GM12878 (cell line): ENCODE measurements at regions of chr6 and their contacts with region 1.

Region 1: GRCh38 chr6:16277101-16277981 is 39.0 kb downstream of the GMPR start:
- DNase-seq: no peak
- ATAC-seq: peak; percentile 88
- H3K4me3 ChIP-seq: no peak overlapping the region
- H3K27ac ChIP-seq: no peak overlapping the region
- H3K4me1 ChIP-seq: no peaks in the 10 kb centered on the region
- H3K27me3 ChIP-seq: no peaks in the 10 kb centered on the region; a peak in 2 of 4 replicates
- CTCF ChIP-seq: peak; percentile 34 to 39 (median 37); a peak in 4 of 6 replicates
- EP300 ChIP-seq: no peak
- POLR2A ChIP-seq: no peak
- RAD21 ChIP-seq: peak; percentile 44

Region 2: DNA sequence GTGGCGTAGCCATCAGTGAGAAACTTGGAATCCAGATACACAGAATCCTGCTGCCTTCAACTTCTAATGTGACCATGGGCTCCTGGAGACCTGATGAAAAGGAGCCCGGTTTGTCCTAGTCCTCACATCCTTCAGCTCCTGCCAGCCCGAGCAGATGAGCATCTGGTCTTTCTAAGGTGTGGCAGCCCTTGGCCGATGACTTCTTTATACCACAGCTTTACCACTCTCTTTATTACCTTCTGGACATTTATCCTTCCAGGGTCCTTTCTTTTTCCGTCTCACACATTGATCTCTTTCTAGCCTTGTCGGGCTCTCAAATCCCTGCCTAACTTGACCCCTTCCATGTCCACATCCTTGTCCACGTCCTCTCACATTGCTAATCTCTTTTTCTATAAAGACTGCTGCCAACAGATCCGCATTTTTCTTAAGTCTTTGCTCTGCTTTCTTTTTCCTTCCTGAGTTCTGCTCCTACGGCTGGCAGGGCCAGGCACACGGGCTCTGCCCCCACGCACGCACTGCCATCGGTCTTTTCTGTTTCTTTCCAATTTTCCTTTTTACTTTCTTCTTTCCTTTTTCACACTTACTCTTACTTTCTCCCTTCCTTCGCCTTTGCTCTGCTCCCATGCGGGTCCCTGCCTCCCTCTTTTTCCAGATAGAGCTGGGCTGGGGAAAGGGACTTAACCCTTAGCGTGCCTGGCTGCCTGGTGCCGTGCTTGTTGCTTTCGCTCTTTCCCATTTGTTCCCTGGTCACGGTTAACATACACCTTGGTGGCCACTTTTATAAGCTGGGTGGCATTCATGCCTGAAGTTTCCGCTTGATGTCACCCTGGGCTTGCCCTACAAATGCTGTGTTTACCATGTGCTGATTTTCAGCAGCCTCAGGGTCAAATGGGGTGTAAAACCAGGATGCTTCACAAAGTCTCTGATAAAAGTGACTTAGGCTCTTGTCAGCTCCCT is 48.4 kb before region 1 on chr6:
- CTCF ChIA-PET with region 1: interaction called, 11 read pairs
- POLR2A ChIA-PET with region 1: no interaction called
- RAD21 ChIA-PET with region 1: interaction called, 3 read pairs
- SMC1A ChIA-PET with region 1: interaction called, 3 read pairs
- in situ Hi-C with region 1: no loop called
- intact Hi-C with region 1: no loop called
- DNase-seq: no peak
- ATAC-seq: peak; percentile 55
- H3K4me3 ChIP-seq: no peak overlapping the region
- H3K27ac ChIP-seq: no peak overlapping the region
- H3K4me1 ChIP-seq: no peaks in the 10 kb centered on the region
- H3K27me3 ChIP-seq: peaks cover 1 to 4% of the 10 kb centered on the region in 2 experiments
- CTCF ChIP-seq: peak in 2 of 3 experiments; percentile 4 to 29; a peak in 1 of 6 replicates
- EP300 ChIP-seq: no peak
- POLR2A ChIP-seq: no peak
- RAD21 ChIP-seq: no peak